MCF 10A (cell line): ENCODE measurements at regions of chr7 and their contacts with region 1.

Region 1: DNA sequence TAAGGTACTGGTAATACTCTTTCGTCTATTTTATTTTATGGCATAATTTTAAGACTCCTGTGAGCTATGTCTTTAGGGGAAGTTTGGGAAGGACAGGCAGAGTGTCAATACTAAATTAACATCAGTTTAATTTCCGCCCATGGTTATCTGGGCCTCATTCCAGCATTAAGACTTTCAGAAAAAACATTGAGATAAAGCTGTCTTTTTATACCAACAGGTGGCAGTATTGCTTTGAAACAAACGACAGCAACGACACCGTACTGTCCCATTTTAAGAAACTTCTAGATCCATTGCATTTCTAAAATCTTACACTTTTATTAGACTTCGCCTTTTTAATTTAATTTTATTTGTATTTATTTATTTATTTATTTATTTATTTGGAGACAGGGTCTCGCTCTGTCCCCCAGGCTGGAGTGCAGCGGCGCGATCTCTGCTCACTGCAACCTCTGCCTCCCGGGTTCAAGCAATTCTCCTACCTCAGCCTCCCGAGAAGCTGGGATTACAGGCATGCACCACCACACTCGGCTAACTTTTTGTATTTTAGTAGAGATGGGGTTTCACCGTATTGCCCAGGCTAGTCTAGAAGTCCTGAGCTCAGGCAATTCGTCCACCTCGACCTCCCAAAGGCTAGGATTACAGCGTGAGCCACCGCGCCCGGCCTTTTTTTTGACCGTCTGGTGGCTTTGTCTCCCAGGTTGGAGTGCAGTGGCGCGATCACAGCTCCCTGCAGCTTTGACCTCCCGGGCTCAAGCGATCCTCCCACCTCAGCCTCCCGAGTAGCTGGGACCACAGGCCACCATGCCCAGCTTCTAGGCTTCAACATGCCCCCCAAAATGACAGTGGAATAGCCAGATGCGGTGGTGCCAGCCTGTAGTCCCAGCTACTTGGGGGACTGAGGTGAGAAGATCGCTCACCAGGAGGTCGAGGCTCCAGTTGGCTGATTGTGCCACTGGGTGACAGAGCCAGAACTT is 78.7 kb upstream of the C1GALT1 start:
- DNase-seq: peak; percentile 73
- H3K4me3 Mint-ChIP-seq: no peak overlapping the region
- H3K27ac Mint-ChIP-seq: no peak overlapping the region
- H3K4me1 Mint-ChIP-seq: peaks cover 32% of the 10 kb centered on the region
- H3K27me3 Mint-ChIP-seq: no peaks in the 10 kb centered on the region
- CTCF ChIP-seq: peak; percentile 52

Region 2: GRCh38 chr7:6607651-6608051 is 496.0 kb before region 1 on chr7:
- CTCF ChIA-PET with region 1: no interaction called
- POLR2A ChIA-PET with region 1: no interaction called
- intact Hi-C with region 1: no loop called
- DNase-seq: no peak
- H3K4me3 Mint-ChIP-seq: no peak overlapping the region
- H3K27ac Mint-ChIP-seq: no peak overlapping the region
- H3K4me1 Mint-ChIP-seq: no peaks in the 10 kb centered on the region
- H3K27me3 Mint-ChIP-seq: peaks cover 4% of the 10 kb centered on the region
- CTCF ChIP-seq: no peak

Region 3: DNA sequence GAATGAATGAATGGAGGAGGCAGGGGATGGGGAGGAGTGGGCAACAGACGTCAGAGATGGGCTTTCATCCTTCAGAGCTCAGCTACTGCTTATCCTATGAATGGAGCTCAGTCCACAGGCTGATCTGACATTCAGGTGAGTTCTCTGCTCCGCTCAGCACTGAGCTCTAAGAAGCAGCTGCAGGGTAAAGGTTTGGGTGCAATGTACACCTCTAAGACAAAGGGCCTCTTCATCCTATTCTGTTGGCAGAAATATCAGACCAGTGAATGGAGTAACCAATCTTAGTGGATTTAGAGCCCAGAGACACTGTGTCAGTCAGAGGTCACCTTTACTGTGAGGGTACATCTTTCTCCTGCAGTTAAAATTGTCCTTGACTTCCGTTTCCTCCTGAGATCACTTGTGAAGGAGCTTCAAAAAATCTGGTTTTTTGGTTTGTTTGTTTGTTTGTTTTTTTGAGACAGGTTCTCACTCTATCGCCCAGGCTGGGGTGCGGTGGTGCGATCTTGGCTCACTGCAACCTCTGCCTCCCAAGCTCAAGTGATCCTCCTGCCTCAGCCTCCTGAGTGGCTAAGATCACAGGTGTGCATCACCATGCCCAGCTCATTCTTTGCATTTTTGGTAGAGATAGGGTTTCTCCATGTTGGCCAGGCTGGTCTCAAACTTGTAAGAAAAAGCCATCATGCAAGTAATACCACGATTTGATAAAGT is 272.5 kb before region 1 on chr7:
- CTCF ChIA-PET with region 1: no interaction called
- POLR2A ChIA-PET with region 1: no interaction called
- intact Hi-C with region 1: no loop called
- DNase-seq: no peak
- H3K4me3 Mint-ChIP-seq: no peak overlapping the region
- H3K27ac Mint-ChIP-seq: no peak overlapping the region
- H3K4me1 Mint-ChIP-seq: no peaks in the 10 kb centered on the region
- H3K27me3 Mint-ChIP-seq: peaks cover 17% of the 10 kb centered on the region
- CTCF ChIP-seq: no peak

Region 4: GRCh38 chr7:6886198-6886597 is 217.4 kb before region 1 on chr7:
- CTCF ChIA-PET with region 1: no interaction called
- POLR2A ChIA-PET with region 1: no interaction called
- intact Hi-C with region 1: no loop called
- DNase-seq: no peak
- H3K4me3 Mint-ChIP-seq: no peak overlapping the region
- H3K27ac Mint-ChIP-seq: no peak overlapping the region
- H3K4me1 Mint-ChIP-seq: no peaks in the 10 kb centered on the region
- H3K27me3 Mint-ChIP-seq: peaks cover 24% of the 10 kb centered on the region
- CTCF ChIP-seq: no peak

Region 5: GRCh38 chr7:7157177-7157886 is 53.7 kb after region 1 on chr7:
- CTCF ChIA-PET with region 1: interaction called, 4 read pairs
- POLR2A ChIA-PET with region 1: interaction called, 3 read pairs
- intact Hi-C with region 1: loop called (anchors 1 kb)
- DNase-seq: peak; percentile 49
- H3K4me3 Mint-ChIP-seq: peak overlapping the region; percentile 71
- H3K27ac Mint-ChIP-seq: peak overlapping the region; percentile 84
- H3K4me1 Mint-ChIP-seq: peaks cover 40% of the 10 kb centered on the region
- H3K27me3 Mint-ChIP-seq: no peaks in the 10 kb centered on the region
- CTCF ChIP-seq: no peak

Region 6: GRCh38 chr7:7263312-7264230 is 159.9 kb after region 1 on chr7:
- CTCF ChIA-PET with region 1: interaction called, 4 read pairs
- POLR2A ChIA-PET with region 1: no interaction called
- intact Hi-C with region 1: loop called (anchors 5 kb)
- DNase-seq: no peak
- H3K4me3 Mint-ChIP-seq: no peak overlapping the region
- H3K27ac Mint-ChIP-seq: no peak overlapping the region
- H3K4me1 Mint-ChIP-seq: no peaks in the 10 kb centered on the region
- H3K27me3 Mint-ChIP-seq: no peaks in the 10 kb centered on the region
- CTCF ChIP-seq: no peak

Region 7: GRCh38 chr7:7416031-7416858 is 312.6 kb after region 1 on chr7:
- CTCF ChIA-PET with region 1: interaction called, 17 read pairs
- POLR2A ChIA-PET with region 1: interaction called, 5 read pairs
- intact Hi-C with region 1: no loop called
- DNase-seq: peak; percentile 30
- H3K4me3 Mint-ChIP-seq: no peak overlapping the region
- H3K27ac Mint-ChIP-seq: peak overlapping the region; percentile 22
- H3K4me1 Mint-ChIP-seq: peaks cover 6% of the 10 kb centered on the region
- H3K27me3 Mint-ChIP-seq: no peaks in the 10 kb centered on the region
- CTCF ChIP-seq: no peak